ENCODE measurements at regions of chr15 and their contacts with region 1.

Region 1: DNA sequence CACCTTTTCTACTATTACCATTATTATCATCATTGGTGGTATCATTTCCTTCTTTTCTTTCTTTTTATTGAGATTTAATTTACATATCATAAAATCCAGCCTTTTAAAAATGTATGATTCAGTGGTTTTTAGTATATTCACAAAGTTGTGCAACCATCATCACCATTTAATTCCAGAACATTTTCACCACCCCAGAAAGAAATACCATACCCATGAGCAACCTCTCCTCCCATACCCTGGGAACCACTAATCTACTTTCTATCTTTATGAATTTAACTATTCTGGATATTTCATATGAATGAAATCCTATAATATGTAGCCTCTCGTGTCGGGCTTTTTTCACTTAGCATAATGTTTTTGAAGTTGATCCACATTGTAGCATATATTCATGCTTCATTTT is 29.1 kb downstream of the AAGAB start:
- DNase-seq: peak; percentile 78
- H3K4me3 ChIP-seq: no peak overlapping the region
- H3K27ac ChIP-seq: peak overlapping the region; percentile 95
- H3K4me1 ChIP-seq: peaks cover 33% of the 10 kb centered on the region
- H3K27me3 ChIP-seq: no peaks in the 10 kb centered on the region
- CTCF ChIP-seq: no peak

Region 2: DNA sequence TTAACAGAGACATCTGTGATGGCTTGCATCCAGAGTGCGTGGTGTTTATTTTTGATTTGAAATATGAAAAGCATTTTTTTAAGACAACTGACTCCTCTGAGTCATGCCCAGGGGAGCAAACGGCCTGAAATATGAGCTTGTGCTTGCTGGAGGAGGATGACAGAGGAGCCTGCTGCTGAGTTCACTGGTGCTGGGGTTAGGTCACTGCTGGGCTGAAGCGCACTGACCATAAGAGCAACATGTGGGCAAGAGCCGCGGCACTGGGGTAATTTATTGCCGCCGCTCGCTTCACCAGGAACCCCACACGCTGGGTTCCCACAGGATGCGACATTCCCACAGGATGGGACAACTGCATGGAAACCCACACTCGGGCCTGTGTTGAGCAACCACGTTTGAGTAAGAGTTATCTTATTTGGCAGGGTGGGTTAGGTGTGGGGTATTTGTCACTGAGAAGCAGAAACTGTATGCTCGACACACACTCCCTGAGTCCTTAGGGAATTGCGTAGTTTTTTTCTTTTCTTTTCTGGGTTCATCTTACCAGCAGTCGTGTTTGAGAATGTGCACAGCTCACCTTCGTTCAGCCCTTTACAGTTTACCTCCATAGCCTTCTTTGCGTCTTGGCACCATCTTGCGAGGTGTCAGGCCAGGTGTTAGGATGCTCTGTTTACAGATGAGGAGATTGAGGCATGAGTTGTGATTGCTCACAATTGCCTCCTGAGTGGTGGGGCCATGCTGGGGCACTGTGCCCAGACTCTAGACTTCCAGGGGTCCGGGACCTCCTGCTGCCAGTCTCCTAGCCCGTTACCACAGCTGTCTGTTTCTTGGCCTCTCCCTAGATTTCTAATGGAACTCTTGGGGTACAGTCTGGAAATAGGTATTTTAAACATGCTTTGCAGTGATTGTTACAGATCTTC is 99.5 kb before region 1 on chr15:
- CTCF ChIA-PET with region 1: no interaction called
- dilution Hi-C with region 1: no loop called
- in situ Hi-C with region 1: no loop called
- intact Hi-C with region 1: loop called (anchors 1 kb)
- DNase-seq: peak; percentile 93
- H3K4me3 ChIP-seq: peak overlapping the region in 1 of 3 experiments; percentile 4
- H3K27ac ChIP-seq: peak overlapping the region; percentile 92
- H3K4me1 ChIP-seq: peaks cover 73% of the 10 kb centered on the region
- H3K27me3 ChIP-seq: no peaks in the 10 kb centered on the region
- CTCF ChIP-seq: no peak

Region 3: DNA sequence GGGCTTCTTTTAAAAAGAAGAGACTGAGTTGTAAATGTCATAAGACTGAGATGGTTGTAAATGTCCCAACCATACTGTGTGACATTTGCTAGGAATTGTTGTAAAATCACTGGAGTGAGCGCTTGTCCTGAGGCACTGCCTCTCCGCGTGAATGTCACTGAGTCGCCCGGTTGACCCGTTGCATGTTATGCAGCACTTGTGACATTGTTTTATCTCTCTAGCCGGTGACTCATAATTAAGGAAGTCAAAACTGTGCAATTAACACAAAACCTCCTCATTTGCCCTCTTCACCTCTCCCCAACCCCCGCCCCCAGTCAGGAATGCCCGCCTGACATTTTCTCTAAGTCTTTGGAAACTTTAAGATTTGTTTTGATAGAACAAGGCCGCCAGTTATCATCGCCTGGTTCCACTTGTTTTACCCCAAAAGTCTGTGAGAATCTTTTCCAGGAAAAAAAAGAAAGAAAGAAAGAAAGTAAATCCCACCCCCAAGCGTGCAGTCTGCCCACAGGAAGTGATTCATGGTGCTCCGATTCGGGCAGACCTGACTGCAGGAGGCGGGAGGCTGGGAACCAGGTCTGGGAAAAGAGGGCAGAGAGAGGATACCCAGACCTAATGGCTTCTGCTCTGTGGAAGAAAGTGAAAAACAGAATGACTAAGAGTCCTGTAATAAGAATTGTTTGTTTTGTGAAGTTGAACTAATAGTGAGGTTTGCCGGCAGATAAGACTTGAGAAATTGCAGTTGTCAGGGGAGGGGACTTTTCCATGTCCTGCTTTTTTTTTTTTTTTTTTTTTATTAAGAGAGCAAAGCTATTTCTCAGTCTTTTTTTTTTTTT is 75.1 kb before region 1 on chr15:
- CTCF ChIA-PET with region 1: no interaction called
- dilution Hi-C with region 1: loop called (anchors 5 kb)
- in situ Hi-C with region 1: no loop called
- intact Hi-C with region 1: no loop called
- DNase-seq: peak; percentile 97
- H3K4me3 ChIP-seq: peak overlapping the region in 2 of 3 experiments; percentile 0 to 23
- H3K27ac ChIP-seq: peak overlapping the region; percentile 92
- H3K4me1 ChIP-seq: peaks cover 51% of the 10 kb centered on the region
- H3K27me3 ChIP-seq: no peaks in the 10 kb centered on the region
- CTCF ChIP-seq: no peak

Region 4: DNA sequence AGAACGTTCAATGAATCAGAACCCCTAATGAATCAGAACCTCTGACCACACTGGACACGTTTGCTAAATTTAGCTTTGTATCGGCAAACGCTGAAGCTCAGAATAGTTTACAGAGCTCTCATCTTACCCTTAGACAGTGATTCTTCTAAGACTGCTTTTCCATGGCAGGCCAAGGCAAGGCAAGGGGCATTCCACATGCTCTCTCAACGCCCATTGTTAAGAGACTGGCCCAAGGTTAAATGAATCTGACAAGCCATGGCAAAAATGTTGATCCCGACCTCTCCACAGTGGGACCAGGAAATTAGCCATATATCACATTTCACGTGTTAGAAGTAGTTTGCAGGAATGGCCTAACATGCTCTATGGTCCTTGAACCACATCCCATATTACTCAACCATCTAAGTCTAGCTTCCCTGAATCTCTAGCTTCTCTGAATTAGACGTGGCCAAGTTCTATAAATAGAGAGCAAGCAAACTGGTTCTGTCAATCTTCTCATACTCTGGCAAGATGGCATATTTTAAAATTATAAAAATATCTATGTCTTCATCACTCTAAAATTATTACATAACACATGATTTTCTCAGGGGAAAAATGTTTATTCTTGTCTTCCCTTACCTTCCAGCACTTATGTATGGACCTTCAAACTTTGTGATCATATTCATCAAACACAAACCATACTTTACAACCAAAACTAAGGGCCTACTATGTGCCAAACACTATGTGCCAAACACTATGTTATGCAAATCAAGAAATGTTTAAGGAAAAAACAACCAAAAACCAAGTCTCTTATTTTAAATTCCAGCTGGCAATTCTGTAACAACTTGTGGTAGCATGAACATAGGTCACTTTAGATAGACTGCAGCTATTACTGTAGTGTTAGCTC is 25.2 kb before region 1 on chr15:
- CTCF ChIA-PET with region 1: no interaction called
- dilution Hi-C with region 1: no loop called
- in situ Hi-C with region 1: no loop called
- intact Hi-C with region 1: no loop called
- DNase-seq: no peak
- H3K4me3 ChIP-seq: no peak overlapping the region
- H3K27ac ChIP-seq: no peak overlapping the region
- H3K4me1 ChIP-seq: no peaks in the 10 kb centered on the region
- H3K27me3 ChIP-seq: no peaks in the 10 kb centered on the region
- CTCF ChIP-seq: no peak

Region 5: DNA sequence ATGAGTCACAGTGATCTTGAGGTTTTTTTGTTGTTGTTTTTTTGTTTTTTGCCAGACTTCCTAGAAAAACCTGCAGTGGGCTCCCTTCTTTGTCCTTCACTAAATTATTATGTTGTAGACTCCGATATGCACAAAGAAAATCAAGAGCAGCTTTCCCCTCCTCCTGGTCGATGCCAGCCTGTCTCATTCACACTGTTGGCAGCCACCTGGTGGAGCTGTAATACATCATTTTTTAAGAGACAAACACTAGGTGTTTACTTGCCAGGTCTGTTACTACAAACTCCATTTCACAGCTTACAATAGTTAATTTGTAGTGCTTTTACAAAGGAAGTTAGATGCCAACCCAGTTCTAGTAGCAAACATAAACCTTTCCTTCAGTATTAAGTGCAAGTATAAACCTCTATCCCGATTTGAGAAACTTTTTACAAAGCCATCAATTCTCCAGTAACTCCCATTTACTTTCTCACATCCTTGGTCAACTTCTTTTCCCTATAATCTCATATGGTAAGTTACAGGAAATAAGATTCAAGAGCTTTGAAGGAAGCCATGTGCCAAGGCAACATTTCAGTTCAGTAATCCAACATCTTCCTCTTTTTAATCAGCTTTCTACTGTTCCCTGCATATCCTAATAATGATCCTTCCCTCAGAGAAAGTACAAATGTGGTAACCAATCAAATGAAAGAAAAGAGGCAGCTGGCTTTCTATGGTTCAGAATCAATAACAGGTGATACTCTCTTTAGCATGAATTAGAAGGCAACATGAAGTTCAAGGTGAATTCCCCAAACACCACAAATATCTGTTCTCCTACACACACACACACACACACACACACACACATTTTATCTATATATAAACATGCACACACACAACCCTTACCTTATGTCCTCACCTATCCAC is 15.1 kb after region 1 on chr15:
- CTCF ChIA-PET with region 1: no interaction called
- dilution Hi-C with region 1: no loop called
- in situ Hi-C with region 1: no loop called
- intact Hi-C with region 1: loop called (anchors 2 kb)
- DNase-seq: peak; percentile 30
- H3K4me3 ChIP-seq: no peak overlapping the region
- H3K27ac ChIP-seq: peak overlapping the region; percentile 46
- H3K4me1 ChIP-seq: peaks cover 16% of the 10 kb centered on the region
- H3K27me3 ChIP-seq: no peaks in the 10 kb centered on the region
- CTCF ChIP-seq: peak; percentile 26 to 62

Region 6: DNA sequence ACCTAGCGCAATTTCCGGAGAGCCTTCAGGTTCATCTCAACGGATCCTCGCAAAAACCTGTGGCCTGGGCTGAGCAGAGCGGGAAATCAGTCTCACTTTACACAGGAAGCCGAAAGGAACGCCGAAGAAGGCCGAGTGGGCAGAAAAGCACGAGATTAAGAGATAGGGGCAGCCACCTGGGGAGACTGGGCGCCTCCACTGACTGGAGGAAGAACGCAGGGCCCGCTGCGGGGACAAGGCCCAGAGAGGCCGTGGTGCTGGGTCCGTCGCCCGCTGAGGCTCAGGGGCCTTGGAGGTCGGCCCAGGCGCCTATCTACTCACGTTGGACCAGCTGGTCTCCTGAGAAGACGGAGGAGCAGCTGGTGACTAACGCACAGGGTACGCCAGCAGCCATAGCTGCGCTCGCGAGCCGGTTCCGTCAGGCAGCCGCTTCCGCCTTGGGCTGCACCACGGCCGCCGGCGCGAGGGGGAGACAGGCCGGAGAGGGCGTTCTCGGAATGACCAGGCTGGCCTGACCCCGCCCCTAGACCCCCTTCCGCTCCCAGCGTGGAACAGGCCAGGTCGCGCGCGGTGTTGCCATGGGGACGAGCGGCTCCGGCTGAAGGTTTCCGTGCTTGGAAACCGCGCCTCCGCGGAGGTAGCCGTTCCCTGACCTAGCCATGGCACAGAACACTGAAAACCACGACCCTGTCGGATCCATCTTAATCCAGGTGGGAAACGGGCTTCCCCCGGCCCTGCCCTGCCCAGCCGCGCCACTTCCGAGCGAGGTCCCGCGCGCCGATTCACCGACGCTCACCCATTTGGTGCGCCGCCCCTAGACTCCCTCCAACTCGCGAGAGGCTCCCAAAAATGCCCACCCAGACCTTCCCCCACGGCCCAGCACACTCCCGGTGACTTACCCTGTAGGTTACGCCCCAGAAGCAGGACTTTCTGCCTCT is 29.2 kb after region 1 on chr15 and contains the starts of genes AAGAB and IQCH:
- CTCF ChIA-PET with region 1: no interaction called
- dilution Hi-C with region 1: no loop called
- in situ Hi-C with region 1: no loop called
- intact Hi-C with region 1: loop called (anchors 1 kb)
- DNase-seq: peak; percentile 99
- H3K4me3 ChIP-seq: peak within 1 kb of the TSS; percentile 66 to 80 (median 78)
- H3K27ac ChIP-seq: peak within 1 kb of the TSS; percentile 98
- H3K4me1 ChIP-seq: no peaks in the 10 kb centered on the region
- H3K27me3 ChIP-seq: no peaks in the 10 kb centered on the region
- CTCF ChIP-seq: no peak
- total RNA-seq, gene AAGAB: 52.2 to 62.5 TPM
- total RNA-seq, gene IQCH: 4.9 to 8.8 TPM

Measured in mammary epithelial cell (primary cell).